ENCODE measurements at regions of chr16 and their contacts with region 1.

Region 1: GRCh38 chr16:71808593-71809459 is at the start of gene AP1G1:
- DNase-seq: peak; percentile 98
- total RNA-seq, gene AP1G1: 39.2 TPM

Region 2: DNA sequence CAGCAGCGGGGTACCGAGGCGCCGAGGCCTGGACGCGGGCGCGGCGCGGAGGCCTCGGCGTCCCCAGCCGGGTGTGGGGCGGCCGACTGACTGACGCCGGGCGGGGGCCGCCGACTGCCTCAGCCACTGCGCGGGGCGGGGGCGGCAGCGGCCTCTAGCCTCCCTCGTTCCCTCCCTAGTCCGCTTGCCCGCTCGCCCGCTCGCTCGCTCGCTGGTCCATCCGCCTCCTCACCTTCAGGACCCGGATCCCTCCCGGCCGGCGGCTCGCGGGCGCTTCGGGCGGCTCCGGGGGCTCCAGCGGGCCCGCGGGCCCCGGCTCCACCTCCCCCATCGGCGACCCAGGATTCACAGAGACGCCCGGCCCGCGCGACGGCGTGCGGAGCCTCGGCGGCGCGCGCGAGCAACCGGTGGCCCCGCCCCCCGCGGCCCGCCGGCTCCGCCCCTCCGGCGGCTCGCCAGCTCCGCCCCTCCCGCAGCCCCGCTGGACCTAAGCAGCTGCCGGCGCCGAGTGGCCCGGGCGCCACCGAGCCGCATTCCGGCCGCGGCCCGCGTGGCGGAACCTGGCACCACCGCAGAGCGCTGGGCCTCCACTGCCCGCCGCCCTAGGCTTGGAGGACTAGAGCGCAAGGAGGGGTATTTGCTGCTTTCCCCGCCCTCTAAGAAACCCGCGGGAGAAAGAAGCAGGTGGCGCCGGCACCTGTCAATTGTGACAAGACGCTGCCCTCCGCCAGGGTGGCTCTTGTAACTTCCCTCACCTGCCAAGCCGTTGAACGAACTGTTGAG is 85.1 kb before region 1 on chr16:
- intact Hi-C with region 1: loop called (anchors 5 kb)
- DNase-seq: peak; percentile 90

Region 3: DNA sequence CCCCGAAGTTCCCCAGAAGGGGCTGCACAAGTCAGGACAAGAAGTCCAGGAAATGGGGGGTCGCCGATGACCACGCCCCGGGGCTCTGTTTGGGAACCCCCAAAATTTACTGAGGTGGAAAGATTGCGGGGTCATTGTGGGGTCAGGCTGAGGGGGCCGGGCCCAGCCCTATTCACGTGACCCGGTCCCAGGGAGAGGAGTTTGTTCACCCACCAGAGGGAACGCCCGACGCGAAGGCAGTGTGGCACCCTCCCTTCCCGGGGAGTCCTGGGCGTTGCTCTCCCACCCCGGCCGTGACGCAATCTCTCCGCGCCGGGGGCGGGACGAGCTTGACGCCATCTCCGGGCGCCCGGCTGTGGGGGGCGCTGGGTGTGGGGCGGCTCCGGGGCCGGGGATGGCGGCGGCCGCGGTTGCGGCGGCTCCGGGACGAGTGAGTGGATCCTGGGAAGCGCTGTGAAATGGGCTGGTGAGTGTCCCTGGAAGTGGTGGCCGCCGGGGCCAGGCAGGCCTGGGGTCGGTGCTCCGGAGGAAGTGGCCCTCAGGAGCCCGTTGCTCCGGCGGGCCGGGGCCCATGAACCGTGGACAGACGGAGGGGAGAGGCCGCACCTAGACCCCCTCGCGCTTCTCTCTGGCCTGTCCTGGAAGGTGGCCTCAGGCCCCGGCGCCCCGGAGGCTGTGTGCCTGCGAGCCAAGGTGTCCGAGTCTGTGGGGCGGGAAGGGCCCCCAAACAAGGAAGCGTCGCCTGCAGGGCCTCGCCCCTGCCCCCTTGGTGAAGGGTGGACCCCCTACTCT is 37.0 kb after region 1 on chr16 and contains the start of gene ATXN1L:
- intact Hi-C with region 1: loop called (anchors 5 kb)
- DNase-seq: peak; percentile 94
- total RNA-seq, gene ATXN1L: 22.9 TPM

Region 4: GRCh38 chr16:71894921-71895678 is 86.3 kb after region 1 on chr16 and contains the start of gene IST1:
- intact Hi-C with region 1: loop called (anchors 2 kb)
- DNase-seq: peak; percentile 99
- total RNA-seq, gene IST1: 111 TPM

Measured in cardiac septum (tissue), 1 donor.